Left cardiac atrium (tissue), 4 donors: ENCODE measurements at regions of chr15 and their contacts with region 1.

Region 1: GRCh38 chr15:26864664-26865191 is 2.1 kb upstream of the GABRA5 start:
- DNase-seq: peak; percentile 44
- ATAC-seq: peak; percentile 69 to 72

Region 2: GRCh38 chr15:25508369-25509002 is 1356.2 kb before region 1 on chr15:
- intact Hi-C with region 1: loop called in 1 of 2 experiments (anchors 5 kb)
- DNase-seq: no peak
- ATAC-seq: peak in 1 of 2 donors; percentile 45

Region 3: GRCh38 chr15:26179906-26180305 is 684.8 kb before region 1 on chr15:
- intact Hi-C with region 1: loop called in 1 of 2 experiments (anchors 5 kb)
- DNase-seq: peak; percentile 31
- ATAC-seq: peak; percentile 74 to 90

Region 4: DNA sequence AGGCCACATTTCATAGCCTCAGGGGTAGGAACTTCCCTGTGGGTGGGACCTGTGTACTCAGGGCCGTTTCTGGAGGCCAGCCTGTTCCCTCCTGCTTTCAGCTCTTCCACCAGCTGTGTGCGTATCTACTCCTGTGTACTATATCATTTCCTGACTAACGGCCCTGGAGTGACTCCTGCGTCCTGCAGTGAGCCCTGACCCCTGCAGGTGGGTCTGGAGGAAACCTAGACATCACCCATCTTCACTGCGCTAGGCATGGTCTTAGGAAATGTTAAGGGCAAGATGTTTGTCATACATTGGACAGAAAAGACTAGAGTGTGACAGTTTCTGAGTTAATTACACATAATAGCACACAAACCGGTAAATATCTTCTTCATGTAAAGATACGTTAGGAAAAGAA is 389.2 kb before region 1 on chr15:
- intact Hi-C with region 1: loop called in 1 of 2 experiments (anchors 10 kb)
- DNase-seq: no peak
- ATAC-seq: peak in 1 of 2 donors; percentile 40

Region 5: DNA sequence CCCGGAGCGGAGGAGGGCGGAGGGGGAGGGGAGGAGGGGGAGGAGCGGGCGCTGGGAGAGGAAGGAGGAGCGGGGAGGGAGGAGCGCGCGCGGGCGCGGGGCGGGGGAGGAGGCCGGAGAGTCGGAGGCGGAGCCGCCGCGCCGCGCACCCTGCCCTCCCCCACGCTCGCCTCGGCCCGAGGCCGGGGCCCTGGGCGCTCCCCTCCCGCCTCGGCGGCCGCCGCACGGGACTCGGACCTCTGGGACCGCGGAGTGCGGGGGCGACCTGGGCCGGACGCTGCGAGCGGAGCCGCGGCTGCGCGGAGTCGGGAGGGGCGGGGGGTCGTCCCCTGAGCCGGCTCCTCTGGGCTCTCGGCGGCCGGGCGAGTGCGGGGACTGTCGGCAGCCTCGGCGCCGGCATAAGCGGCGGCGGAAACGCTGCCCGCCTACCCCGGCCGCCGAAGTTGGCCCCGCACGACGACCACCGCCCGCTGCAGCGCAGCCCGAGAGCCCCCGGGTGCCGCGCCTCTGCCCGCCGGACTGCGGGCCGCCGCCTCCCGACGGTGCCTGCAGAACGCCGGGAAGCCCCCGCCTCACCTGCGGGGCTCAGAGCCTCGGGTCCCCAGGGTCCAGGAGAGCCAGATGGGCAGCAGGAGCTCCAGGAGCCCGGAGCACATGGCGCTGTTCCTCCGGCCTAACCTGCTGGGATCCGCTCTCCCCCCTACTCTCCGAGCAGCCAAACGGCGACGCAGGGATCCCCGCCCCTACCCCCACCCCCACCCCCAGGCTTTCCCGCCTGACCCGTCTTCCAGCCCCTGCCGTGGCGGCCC is 91.5 kb before region 1 on chr15:
- intact Hi-C with region 1: loop called in 1 of 2 experiments (anchors 10 kb)
- DNase-seq: peak; percentile 69
- ATAC-seq: peak; percentile 88 to 93